HCT116 (cell line): ENCODE measurements at regions of chr9 and their contacts with region 1.

Region 1: GRCh38 chr9:100455470-100455869 is 17.5 kb upstream of the TMEFF1 start:
- DNase-seq: no peak
- ATAC-seq: no peak
- H3K4me3 ChIP-seq: no peak overlapping the region
- H3K27ac ChIP-seq: no peak overlapping the region
- H3K4me1 ChIP-seq: no peaks in the 10 kb centered on the region
- H3K27me3 ChIP-seq: no peaks in the 10 kb centered on the region
- CTCF ChIP-seq: no peak
- POLR2A ChIP-seq: no peak
- RAD21 ChIP-seq: no peak

Region 2: GRCh38 chr9:99040911-99041582 is 1414.4 kb before region 1 on chr9:
- CTCF ChIA-PET with region 1: no interaction called
- POLR2A ChIA-PET with region 1: no interaction called
- RAD21 ChIA-PET with region 1: no interaction called
- intact Hi-C with region 1: no loop called
- DNase-seq: no peak
- ATAC-seq: no peak
- H3K4me3 ChIP-seq: no peak overlapping the region
- H3K27ac ChIP-seq: no peak overlapping the region
- H3K4me1 ChIP-seq: no peaks in the 10 kb centered on the region
- H3K27me3 ChIP-seq: no peaks in the 10 kb centered on the region
- CTCF ChIP-seq: no peak
- POLR2A ChIP-seq: no peak
- RAD21 ChIP-seq: no peak

Region 3: GRCh38 chr9:100294341-100294740 is 161.1 kb before region 1 on chr9:
- CTCF ChIA-PET with region 1: no interaction called
- POLR2A ChIA-PET with region 1: no interaction called
- RAD21 ChIA-PET with region 1: no interaction called
- intact Hi-C with region 1: no loop called
- DNase-seq: no peak
- ATAC-seq: no peak
- H3K4me3 ChIP-seq: no peak overlapping the region
- H3K27ac ChIP-seq: no peak overlapping the region
- H3K4me1 ChIP-seq: no peaks in the 10 kb centered on the region
- H3K27me3 ChIP-seq: no peaks in the 10 kb centered on the region
- CTCF ChIP-seq: no peak
- POLR2A ChIP-seq: no peak
- RAD21 ChIP-seq: no peak

Region 4: GRCh38 chr9:100505564-100506159 is 50.2 kb after region 1 on chr9:
- CTCF ChIA-PET with region 1: no interaction called
- POLR2A ChIA-PET with region 1: no interaction called
- RAD21 ChIA-PET with region 1: no interaction called
- intact Hi-C with region 1: loop called (anchors 5 kb)
- DNase-seq: peak; percentile 61
- ATAC-seq: peak; percentile 95
- H3K4me3 ChIP-seq: no peak overlapping the region
- H3K27ac ChIP-seq: no peak overlapping the region
- H3K4me1 ChIP-seq: peaks cover 0 to 3% of the 10 kb centered on the region in 2 experiments; a peak in 1 of 4 replicates
- H3K27me3 ChIP-seq: no peaks in the 10 kb centered on the region
- CTCF ChIP-seq: peak; percentile 65 to 98 (median 96)
- POLR2A ChIP-seq: no peak
- RAD21 ChIP-seq: peak; percentile 71

Region 5: DNA sequence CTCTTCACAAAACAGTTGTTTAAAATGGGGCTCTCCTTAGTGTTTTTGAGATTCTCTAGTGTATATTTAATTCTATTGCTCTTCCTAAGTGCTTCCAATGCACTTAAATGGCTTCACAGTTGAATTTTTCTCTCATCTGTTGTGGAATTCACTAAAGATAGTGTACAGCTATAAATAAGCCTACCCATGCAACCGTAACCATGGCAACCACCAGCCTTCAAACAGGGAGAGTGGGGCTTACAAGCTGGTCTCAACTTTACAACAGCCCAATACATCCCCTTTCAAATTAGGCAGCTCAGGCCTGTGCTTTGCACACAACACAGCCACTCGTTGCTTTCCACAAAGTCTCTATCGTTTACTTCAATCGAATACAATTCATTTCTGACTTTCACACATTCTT is 429.0 kb after region 1 on chr9:
- CTCF ChIA-PET with region 1: no interaction called
- POLR2A ChIA-PET with region 1: no interaction called
- RAD21 ChIA-PET with region 1: no interaction called
- intact Hi-C with region 1: no loop called
- DNase-seq: no peak
- ATAC-seq: no peak
- H3K4me3 ChIP-seq: no peak overlapping the region
- H3K27ac ChIP-seq: no peak overlapping the region
- H3K4me1 ChIP-seq: no peaks in the 10 kb centered on the region
- H3K27me3 ChIP-seq: peaks cover 18% of the 10 kb centered on the region
- CTCF ChIP-seq: no peak
- POLR2A ChIP-seq: no peak
- RAD21 ChIP-seq: no peak